Activated CD8-positive, alpha-beta memory T cell treated with anti-CD3 and anti-CD28 coated beads, Interleukin-2, amount 10 ng/mL, durations not matched to agents 7 days and 5 days (primary cell): ENCODE measurements at regions of chr6 and their contacts with region 1.

Region 1: DNA sequence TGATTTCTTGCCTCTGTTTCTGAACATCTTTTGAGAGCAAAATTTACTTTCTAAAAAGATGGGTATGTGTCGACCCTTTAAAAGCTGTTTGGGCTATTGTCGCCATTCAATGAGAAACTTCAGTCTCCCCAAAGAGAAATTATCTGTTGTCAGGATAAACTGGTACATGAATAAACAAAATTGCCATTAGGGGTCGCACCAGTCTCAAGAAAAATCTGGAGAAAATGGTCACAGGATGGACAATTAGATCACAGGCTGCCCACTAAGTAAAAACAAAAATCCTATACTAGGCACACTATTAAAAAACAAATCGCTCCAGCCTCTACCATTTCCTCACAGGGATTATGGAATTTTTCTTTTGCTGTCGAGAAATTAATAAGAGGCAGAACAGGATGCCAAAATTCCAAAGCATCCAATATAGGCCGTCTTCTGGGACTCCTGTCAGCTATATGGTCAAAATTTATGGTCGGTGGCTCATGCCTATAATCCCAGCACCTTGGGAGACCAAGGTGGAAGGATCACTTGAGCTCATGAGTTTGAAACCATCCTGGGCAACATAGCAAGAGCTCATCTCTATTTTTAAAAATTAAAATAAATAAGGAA is 5.5 kb upstream of the HLA-E start:
- DNase-seq: peak; percentile 54
- ATAC-seq: no peak
- H3K4me3 Mint-ChIP-seq: no peak overlapping the region
- H3K27ac Mint-ChIP-seq: no peak overlapping the region
- H3K4me1 Mint-ChIP-seq: peaks cover 30% of the 10 kb centered on the region
- H3K27me3 Mint-ChIP-seq: peaks cover 47% of the 10 kb centered on the region

Region 2: DNA sequence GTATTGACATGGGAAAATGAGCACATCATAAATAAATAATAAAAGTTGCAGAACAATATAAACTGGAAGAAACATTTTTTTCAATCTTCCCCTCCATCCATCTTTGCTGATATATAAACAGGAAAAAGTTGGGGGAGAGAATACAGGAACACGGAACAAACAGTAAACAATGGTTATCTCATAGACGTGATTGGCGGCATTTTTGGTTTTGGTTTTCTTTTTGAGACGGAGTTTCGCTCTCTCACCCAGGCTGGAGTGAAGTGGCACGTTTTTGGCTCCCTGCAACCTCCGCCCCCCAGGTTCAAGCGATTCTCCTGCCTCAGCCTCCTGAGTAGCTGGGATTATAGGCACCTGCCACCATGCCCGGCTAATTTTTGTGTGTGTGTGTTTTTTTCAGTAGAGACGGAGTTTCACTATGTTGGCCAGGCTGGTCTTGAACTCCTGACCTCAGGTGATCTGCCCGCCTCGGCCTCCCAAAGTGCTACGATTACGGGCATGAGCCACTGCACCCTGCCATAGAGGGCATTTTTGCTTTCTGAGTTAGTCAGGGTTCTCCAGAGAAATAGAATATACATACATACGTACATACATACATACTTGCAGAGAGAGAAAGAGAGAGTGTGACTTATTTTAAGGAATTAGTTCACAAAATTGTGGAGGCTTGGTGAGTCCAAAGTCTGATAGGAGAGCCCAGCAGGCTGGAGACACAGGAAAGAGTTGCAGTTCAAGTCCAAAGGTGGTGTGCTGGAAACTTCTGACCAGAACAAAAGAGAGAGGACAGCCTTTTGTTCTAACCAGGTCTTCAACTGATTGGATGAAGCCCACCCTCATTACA is 49.9 kb after region 1 on chr6:
- CTCF ChIA-PET with region 1: interaction called, 305 read pairs
- DNase-seq: peak; percentile 57
- ATAC-seq: peak; percentile 63
- H3K4me3 Mint-ChIP-seq: peak overlapping the region; percentile 77
- H3K27ac Mint-ChIP-seq: peak overlapping the region; percentile 93
- H3K4me1 Mint-ChIP-seq: peaks cover 37% of the 10 kb centered on the region
- H3K27me3 Mint-ChIP-seq: no peaks in the 10 kb centered on the region

Region 3: DNA sequence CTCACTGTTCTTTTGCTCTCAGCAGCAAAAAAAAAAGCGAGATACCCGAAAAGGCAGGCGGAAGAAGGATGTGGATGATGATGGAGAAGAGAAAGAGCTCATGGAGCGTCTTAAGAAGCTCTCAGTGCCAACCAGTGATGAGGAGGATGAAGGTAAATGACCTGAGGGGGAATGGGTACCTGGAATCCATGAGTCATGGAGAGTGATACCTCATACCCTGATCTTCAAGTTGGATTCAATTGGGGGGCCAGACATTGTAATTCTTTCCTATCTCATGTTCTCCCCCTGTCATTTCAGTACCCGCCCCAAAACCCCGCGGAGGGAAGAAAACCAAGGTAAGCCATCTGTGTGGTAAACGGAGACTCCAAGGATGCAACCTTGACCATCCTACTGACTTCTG is 94.3 kb after region 1 on chr6:
- CTCF ChIA-PET with region 1: interaction called, 11 read pairs
- DNase-seq: no peak
- ATAC-seq: no peak
- H3K4me3 Mint-ChIP-seq: no peak overlapping the region
- H3K27ac Mint-ChIP-seq: no peak overlapping the region
- H3K4me1 Mint-ChIP-seq: peaks cover 25% of the 10 kb centered on the region
- H3K27me3 Mint-ChIP-seq: no peaks in the 10 kb centered on the region

Region 4: GRCh38 chr6:30600451-30600961 is 116.7 kb after region 1 on chr6:
- CTCF ChIA-PET with region 1: interaction called, 45 read pairs
- DNase-seq: no peak
- ATAC-seq: no peak
- H3K4me3 Mint-ChIP-seq: no peak overlapping the region
- H3K27ac Mint-ChIP-seq: no peak overlapping the region
- H3K4me1 Mint-ChIP-seq: peaks cover 12% of the 10 kb centered on the region
- H3K27me3 Mint-ChIP-seq: no peaks in the 10 kb centered on the region